HAP-1 (cell line): ENCODE measurements at regions of chr5 and their contacts with region 1.

Region 1: DNA sequence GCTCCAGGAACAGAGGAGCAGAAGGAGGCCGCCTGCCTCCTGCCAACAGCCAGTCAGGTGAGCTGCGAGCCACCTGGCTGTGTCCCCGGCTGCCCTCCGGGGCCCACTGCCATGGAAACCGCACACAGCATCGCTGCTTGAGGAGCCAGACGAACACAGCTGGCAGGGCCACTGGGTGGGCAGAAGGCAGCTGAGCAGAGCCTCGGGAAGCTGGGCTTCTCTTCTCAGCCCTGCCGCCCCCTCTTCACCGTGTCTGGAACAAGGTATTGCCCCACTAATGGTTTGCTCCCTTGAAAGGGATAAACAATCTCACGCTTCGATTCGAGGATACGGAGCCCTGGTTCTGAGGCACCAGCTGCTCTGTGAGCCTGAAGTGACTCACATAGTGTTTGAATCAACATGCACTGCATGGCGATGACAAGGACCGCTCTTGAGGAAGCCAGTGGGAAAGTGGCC is 63.7 kb upstream of the RUFY1 start:
- DNase-seq: no peak
- H3K4me3 ChIP-seq: no peak overlapping the region
- H3K4me1 ChIP-seq: no peaks in the 10 kb centered on the region
- H3K27me3 ChIP-seq: no peaks in the 10 kb centered on the region

Region 2: DNA sequence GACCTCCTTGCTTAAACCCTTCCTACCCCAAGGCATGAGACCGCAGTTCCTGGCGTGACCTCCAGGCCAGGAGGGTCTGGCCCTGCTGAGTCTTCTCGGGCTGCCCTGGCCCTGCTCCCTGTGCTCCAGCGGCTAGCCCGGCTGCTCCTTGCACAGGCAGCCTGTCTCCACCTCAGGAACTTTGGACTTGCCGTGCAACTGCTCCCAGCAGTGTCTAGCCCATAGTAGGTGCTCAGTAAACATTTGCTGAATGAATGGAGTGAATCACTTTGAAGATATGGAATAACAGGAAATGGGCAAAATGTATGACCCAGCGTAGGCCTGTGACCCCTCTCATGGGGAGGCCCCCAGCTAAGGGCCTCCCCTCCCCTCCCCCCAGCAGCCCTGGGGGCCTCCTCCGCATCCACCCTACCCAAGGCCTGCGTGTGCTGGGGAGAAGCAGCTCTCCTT is 299.4 kb before region 1 on chr5:
- in situ Hi-C with region 1: loop called (anchors 10 kb)
- DNase-seq: peak in 1 of 2 experiments; percentile 25
- H3K4me3 ChIP-seq: no peak overlapping the region
- H3K4me1 ChIP-seq: peaks cover 10% of the 10 kb centered on the region
- H3K27me3 ChIP-seq: no peaks in the 10 kb centered on the region